GM18951 (cell line): ENCODE measurements at regions of chrX and their contacts with region 1.

Region 1: DNA sequence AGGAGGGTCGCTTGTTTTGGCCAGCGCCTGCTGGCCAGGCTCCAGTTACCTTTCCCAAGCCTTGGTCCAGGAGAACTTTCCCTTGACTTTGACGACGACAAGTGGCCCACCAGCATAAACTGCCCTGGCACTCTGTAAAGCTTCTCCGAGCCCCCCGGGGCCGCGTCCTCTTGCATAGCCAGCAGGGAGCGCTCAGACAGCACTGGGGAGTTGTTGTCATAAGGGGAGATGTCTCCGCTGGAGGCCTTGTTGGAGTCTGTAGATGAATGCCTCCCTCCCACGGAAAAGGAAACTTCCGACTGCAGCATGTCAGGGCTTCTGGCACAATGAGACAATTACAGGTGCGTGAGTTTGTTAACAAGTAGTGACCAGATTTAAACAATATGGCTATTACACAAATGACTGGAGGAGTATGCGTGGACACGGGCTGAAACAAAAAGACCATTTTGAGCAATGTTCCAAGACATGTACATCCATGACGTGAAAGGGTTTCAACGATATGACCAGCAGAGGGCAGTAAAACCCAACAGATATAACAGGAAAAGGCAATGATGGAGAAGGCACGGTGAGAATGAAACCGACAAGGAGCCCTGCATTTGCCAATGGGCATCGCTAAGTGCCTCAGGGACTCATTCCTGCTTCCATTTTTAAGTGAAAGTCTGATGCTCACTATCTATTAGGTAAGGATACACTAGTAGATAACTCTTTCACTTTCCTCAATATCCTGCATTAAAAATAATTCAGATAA is 33.0 kb downstream of the HCCS start:
- POLR2A ChIP-seq: no peak

Region 2: GRCh38 chrX:10189317-10190268 is 954.5 kb before region 1 on chrX:
- in situ Hi-C with region 1: loop called (anchors 25 kb)
- POLR2A ChIP-seq: no peak

Region 3: GRCh38 chrX:11309220-11309619 is 165.1 kb after region 1 on chrX:
- in situ Hi-C with region 1: no loop called
- POLR2A ChIP-seq: no peak

Region 4: DNA sequence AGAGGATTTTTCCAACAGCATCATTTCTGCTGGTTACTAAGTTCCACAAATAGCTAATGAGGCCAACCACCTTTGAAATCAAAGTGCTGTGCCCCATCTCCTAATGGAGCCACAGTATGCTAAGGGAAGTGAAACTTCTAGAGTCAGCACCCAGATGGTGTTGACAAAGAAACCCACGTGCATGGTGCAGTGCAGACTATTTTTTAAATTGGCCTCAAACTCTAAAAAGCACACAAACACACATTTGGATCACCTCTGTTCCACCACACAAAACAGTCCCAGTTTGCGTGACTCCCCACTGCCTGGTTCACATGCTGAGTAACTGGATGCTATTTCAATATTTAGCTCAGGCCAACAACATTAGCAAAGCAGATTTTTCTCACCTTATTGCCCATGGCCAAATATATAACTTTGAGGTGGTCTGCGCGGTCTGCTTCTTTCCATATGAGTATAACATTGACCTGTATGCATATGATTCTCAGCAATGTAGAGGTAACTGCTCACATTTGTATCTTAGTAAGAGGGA is 219.0 kb after region 1 on chrX:
- in situ Hi-C with region 1: loop called (anchors 10 kb)
- POLR2A ChIP-seq: no peak

Region 5: GRCh38 chrX:11533211-11533651 is 389.1 kb after region 1 on chrX:
- in situ Hi-C with region 1: loop called (anchors 10 kb)
- POLR2A ChIP-seq: no peak

Region 6: DNA sequence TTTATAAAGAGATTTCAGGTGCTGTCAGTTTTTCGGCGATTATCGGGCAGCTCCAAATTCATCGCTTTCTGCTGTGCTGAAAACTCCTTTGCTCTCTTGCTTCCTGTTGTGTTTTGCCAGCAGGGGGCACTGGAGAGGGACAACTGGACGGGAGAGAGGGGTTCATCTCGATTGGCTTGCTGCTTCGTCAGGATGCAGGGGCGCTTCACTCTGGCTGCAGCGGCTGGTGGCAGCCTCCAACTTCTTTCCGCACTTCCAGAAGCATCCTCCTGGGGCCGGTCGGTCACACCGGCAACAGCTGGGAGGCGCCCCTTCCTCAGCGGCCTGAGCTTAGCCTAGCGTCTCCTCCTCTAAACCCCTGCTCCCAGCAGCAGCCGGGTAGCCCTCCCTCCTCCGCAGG is 643.5 kb after region 1 on chrX:
- in situ Hi-C with region 1: loop called (anchors 25 kb)
- POLR2A ChIP-seq: no peak